Ascending aorta (tissue), 2 donors: ENCODE measurements at regions of chr19 and their contacts with region 1.

Region 1: DNA sequence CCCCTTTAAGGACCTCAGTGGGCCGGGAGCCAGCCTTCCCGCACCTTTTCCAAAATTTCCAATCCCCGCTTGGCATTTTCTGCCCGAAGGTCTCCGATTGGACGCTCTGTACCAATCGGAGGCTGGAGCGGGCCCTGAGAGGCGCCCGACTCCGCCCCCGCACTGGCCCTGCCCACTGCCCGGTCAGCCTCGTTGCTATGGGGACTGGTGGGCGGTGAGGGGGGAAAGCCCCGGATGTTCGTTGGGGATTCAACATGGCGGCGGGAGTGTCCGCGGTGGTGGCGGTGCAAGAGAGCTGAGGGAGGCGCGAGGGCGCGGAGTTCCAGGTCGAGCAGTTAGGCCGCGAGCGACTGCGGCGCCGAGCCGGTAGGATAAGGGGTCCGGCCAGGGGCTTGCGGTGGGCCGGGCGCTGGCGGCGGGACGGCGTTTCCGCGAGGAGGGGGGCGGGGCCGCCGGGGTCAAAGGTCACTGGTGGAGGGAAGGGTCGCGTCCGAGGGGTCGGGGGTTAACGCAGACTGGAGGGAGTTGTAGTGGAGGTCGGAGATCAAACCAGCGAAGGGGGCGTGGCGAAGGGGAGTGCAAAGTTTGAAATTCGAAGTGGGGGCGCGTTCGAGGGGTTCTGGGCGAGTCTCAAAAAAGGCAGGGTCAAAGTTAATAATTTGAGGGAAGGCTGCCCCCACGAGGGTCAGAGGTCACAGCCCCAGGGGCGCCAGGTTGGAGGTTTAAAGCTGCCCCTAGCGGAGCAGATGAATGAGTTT is at the start of gene PAK4:
- DNase-seq: peak; percentile 90 to 99
- H3K4me3 ChIP-seq: peak within 1 kb of the TSS; percentile 88 to 89
- H3K27ac ChIP-seq: peak within 1 kb of the TSS; percentile 59 to 68
- H3K4me1 ChIP-seq: peaks cover 9 to 24% of the 10 kb centered on the region in 2 donors
- H3K27me3 ChIP-seq: no peaks in the 10 kb centered on the region
- CTCF ChIP-seq: no peak
- total RNA-seq, gene PAK4: 27.4 TPM

Region 2: DNA sequence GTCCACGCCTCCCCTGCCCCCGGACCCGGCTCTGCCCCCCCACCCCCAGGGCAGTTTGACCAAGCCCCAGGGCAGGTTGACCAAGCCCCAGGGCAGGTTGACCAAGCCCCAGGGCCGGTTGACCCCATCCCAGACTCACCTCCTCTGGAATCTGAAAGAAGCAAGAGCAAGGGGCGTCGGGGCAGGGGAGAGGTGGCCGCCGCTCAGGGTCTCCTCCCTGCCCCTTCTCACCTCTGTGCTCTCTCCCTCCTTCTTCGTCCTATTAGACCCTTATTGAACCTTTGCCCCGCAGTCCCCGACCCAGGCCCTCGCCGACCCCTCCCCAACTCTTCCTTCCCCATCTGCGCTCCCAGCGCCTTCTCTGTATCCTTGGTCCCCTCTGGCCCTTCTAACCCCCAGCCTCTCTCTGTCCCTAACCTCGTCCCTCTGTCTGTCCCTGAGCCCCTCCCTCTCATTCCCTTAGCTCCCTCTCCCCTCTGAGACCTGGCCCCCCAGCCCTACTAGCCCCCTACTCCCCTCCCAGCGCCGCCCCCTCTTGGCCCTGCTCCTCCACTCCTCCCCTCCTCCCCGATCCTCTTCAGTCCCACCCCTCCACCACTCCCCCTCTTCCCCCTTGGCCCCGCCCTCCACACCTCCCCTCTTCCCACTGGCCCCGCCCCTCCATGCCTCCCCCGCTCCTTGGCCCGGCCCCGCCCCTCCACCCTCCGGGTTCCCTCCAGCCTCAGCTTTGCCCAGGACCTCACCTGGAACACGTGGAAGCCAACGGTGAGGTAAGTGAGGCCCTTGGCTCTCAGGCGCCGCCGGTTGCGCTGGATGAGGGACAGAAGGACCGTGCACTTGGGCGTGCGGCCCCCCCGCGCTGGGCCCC is 389.1 kb before region 1 on chr19:
- intact Hi-C with region 1: no loop called
- DNase-seq: no peak
- H3K4me3 ChIP-seq: peak overlapping the region; percentile 42 to 63
- H3K27ac ChIP-seq: peak overlapping the region in 1 of 2 donors; percentile 5
- H3K4me1 ChIP-seq: peaks cover 6 to 20% of the 10 kb centered on the region in 2 donors
- H3K27me3 ChIP-seq: no peaks in the 10 kb centered on the region
- CTCF ChIP-seq: no peak

Region 3: GRCh38 chr19:39144245-39145071 is 18.7 kb after region 1 on chr19:
- intact Hi-C with region 1: loop called (anchors 1 kb)
- DNase-seq: no peak
- H3K4me3 ChIP-seq: peak overlapping the region in 1 of 2 donors; percentile 52
- H3K27ac ChIP-seq: peak overlapping the region; percentile 64 to 78
- H3K4me1 ChIP-seq: peaks cover 6 to 30% of the 10 kb centered on the region in 2 donors
- H3K27me3 ChIP-seq: no peaks in the 10 kb centered on the region
- CTCF ChIP-seq: no peak

Region 4: GRCh38 chr19:39187559-39187957 is 61.8 kb after region 1 on chr19:
- intact Hi-C with region 1: loop called (anchors 1 kb)
- DNase-seq: no peak
- H3K4me3 ChIP-seq: no peak overlapping the region
- H3K27ac ChIP-seq: no peak overlapping the region
- H3K4me1 ChIP-seq: no peaks in the 10 kb centered on the region
- H3K27me3 ChIP-seq: no peaks in the 10 kb centered on the region
- CTCF ChIP-seq: no peak

Region 5: DNA sequence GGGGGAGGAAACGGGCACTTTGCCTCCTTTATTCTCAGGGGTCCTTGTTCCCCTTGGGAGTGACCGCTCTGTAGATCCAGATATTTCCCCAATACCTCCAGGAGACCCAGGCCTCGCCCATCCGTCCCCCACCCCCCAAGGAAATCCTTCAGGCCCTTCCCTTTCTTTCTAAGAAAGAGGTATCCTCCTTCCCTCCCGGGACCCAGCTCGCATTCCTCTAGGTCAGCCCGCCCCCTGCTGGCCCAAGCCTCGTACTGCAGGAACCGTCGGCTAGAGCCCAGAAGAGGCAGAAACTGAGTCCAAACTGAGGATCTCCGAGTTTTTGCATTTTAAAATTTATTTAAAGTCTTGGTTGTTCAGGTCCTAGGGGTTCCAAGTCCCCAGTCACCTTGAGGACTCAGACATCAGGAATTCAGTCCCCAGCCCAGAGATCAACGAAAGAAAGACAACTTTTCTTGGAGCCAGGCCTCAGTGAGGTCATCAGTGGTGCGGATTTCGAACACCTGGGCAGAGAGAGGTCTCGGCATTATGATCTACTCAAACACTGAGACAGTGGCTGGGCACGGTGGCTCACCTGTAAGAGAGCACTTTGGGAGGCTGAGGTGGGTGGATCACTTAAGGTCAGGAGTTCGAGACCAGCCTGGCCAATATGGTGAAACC is 202.4 kb after region 1 on chr19:
- intact Hi-C with region 1: loop called (anchors 1 kb)
- DNase-seq: peak in 1 of 2 donors; percentile 90
- H3K4me3 ChIP-seq: no peak overlapping the region
- H3K27ac ChIP-seq: no peak overlapping the region
- H3K4me1 ChIP-seq: no peaks in the 10 kb centered on the region
- H3K27me3 ChIP-seq: no peaks in the 10 kb centered on the region
- CTCF ChIP-seq: peak; percentile 92 to 98 (median 96)

Region 6: DNA sequence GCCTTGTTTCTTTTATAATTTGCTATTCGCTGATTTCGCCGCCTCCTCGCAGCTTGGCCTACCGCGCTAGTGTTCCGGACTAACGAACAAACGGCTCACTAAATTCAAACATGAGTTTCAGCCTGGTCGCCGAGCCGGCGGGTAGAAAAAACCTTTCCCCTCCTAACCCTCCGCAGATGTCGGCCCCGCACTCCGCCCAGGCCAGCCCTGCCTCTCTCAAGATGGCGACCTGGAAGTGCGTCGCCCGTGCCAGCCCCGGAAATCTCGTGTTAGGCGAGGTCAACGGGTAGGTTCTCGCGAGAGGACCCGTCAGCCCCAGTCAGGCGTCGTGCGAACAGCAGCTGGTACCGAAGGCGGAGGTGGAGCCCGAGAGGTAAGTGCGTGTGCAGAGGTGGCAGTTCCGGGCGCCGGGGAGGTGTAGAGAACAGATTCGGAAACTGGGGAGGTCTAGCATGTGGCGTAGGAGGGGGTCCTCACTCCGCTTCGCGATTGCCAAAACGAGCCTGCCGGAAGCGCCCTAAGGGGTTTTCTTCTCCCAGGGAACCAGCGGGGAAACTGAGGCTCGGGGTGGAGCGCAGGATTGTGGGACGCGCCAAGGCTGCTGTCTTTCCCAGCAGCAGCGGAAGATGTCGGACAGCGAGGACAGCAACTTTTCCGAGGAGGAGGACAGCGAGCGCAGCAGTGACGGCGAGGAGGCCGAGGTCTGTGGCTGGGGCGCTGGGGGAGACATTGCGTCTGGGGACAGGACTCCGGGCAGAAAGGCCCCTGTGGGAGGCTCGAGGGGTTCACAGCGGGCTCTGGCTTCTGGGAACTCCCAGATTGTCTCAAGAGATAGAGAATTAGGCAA is 319.8 kb after region 1 on chr19 and contains the start of gene SUPT5H:
- intact Hi-C with region 1: loop called (anchors 10 kb)
- DNase-seq: peak; percentile 88 to 99
- H3K4me3 ChIP-seq: peak within 1 kb of the TSS; percentile 86 to 92
- H3K27ac ChIP-seq: peak within 1 kb of the TSS; percentile 91 to 96
- H3K4me1 ChIP-seq: peaks cover 13 to 32% of the 10 kb centered on the region in 2 donors
- H3K27me3 ChIP-seq: no peaks in the 10 kb centered on the region
- CTCF ChIP-seq: no peak
- total RNA-seq, gene SUPT5H: 142 TPM

Region 7: GRCh38 chr19:39539519-39540332 is 414.0 kb after region 1 on chr19 and contains the start of gene EID2:
- intact Hi-C with region 1: loop called (anchors 1 kb)
- DNase-seq: peak; percentile 76 to 96
- H3K4me3 ChIP-seq: peak within 1 kb of the TSS; percentile 77 to 95
- H3K27ac ChIP-seq: peak within 1 kb of the TSS; percentile 95 to 96
- H3K4me1 ChIP-seq: peaks cover 5 to 16% of the 10 kb centered on the region in 2 donors
- H3K27me3 ChIP-seq: no peaks in the 10 kb centered on the region
- CTCF ChIP-seq: peak; percentile 71 to 89 (median 87)
- total RNA-seq, gene EID2: 11.8 TPM

Region 8: DNA sequence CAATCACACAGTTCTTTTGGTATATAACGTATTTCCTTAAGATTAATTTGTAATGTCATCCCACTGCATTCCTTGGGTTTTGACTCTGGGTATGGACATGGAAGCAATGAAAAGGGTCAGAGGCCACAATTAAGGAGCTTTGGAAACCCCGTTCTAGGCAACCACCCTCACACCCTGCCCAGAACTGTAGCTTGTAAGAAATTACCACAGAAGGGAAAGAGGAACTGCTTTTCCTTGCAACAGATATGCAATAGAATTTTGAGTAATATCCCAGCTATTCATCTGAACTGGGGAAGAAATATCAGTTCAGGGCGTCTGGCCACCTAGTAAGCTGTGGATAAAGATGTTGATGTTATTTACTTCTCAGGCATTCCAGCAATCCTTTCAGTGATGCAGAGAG is 613.1 kb after region 1 on chr19:
- intact Hi-C with region 1: no loop called
- DNase-seq: no peak
- H3K4me3 ChIP-seq: no peak overlapping the region
- H3K27ac ChIP-seq: no peak overlapping the region
- H3K4me1 ChIP-seq: no peaks in the 10 kb centered on the region
- H3K27me3 ChIP-seq: no peaks in the 10 kb centered on the region
- CTCF ChIP-seq: no peak

Region 9: DNA sequence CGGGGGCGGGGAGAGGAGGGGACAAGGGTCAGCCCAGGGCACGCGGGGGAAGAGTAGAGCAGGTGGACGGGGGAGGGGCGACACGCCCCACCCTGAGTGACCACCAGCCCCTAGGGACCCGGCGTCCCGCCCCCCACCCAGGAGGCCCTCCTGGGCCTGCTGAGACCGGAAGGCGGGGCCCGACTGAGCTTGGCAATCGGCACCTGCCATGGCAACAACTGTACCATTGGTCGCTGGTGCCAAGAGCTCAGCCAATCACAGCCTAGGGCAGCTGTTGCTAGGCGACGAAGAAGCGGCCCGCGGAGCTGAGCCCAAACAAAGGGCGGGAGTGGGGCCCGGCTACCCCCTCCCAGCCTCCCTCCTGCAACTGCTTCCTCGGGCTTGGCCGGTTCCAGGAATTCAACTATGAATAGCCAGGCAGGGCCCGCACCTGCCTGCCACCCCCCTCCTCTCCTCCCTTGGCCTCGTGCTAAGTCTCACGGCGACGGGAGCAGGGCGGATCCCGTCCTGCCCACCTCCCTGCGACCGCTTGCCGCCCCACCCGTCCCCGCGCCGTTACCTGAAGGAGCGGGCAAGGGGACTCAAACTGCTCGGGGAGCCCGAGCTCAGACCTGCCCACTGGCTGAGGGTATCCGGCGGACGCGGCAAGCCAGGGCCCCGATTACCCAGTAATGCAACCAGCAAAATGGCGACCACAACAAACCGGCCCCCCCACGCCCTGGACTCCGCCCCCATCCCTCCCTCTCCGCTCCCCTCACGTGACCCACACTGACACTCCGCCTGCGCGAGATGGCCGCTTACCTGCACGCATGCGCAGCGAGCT is 707.9 kb after region 1 on chr19 and contains the start of gene DYRK1B:
- intact Hi-C with region 1: loop called (anchors 10 kb)
- DNase-seq: peak; percentile 91 to 99
- H3K4me3 ChIP-seq: peak within 1 kb of the TSS; percentile 75 to 99
- H3K27ac ChIP-seq: peak within 1 kb of the TSS; percentile 77 to 93
- H3K4me1 ChIP-seq: peaks cover 0 to 17% of the 10 kb centered on the region in 2 donors
- H3K27me3 ChIP-seq: no peaks in the 10 kb centered on the region
- CTCF ChIP-seq: no peak
- total RNA-seq, gene DYRK1B: 34.7 TPM